ENCODE measurements at regions of chr1 and their contacts with region 1.

Region 1: GRCh38 chr1:43493661-43494450 is 36.8 kb upstream of the PTPRF start:
- DNase-seq: no peak
- H3K4me3 ChIP-seq: no peak overlapping the region
- H3K27ac ChIP-seq: no peak overlapping the region
- H3K4me1 ChIP-seq: no peaks in the 10 kb centered on the region
- H3K27me3 ChIP-seq: no peaks in the 10 kb centered on the region
- CTCF ChIP-seq: no peak
- EP300 ChIP-seq: no peak
- POLR2A ChIP-seq: no peak

Region 2: GRCh38 chr1:42231253-42231652 is 1262.6 kb before region 1 on chr1:
- intact Hi-C with region 1: loop called in 1 of 4 experiments (anchors 5 kb)
- DNase-seq: no peak
- H3K4me3 ChIP-seq: no peak overlapping the region
- H3K27ac ChIP-seq: no peak overlapping the region
- H3K4me1 ChIP-seq: no peaks in the 10 kb centered on the region
- H3K27me3 ChIP-seq: no peaks in the 10 kb centered on the region
- CTCF ChIP-seq: no peak
- EP300 ChIP-seq: no peak
- POLR2A ChIP-seq: no peak

Region 3: DNA sequence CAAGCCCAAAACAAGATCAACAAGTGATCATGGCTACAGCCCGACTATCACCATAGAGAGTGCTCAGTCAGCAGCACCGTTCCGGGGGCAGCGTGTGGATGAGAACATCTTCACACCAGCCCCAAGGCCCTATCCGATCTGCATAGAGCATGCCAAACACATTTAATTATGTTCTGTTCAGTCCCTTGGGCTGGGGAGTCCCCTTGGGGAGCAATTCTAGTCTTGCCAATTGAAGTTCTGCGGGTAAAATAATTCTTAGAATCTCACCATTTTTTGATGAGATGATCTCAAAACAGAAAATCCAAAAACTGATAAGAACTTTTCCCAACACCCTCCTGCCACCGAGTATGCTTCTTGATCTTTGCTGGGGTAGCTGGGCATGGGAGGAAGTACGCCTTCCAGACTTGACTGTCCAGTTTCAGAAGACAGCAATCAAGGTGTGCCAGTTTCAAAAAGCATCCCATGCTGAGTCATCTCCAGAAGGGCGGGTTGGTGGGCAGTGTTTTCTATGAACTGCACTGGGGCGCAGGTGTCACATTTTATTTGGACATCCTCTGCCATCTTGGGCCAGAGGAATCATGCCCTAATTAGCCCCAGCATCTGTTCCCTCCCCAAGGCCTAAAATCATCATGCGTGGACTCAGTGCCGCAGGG is 16.0 kb after region 1 on chr1:
- intact Hi-C with region 1: no loop called
- DNase-seq: no peak
- H3K4me3 ChIP-seq: no peak overlapping the region
- H3K27ac ChIP-seq: no peak overlapping the region
- H3K4me1 ChIP-seq: no peaks in the 10 kb centered on the region
- H3K27me3 ChIP-seq: no peaks in the 10 kb centered on the region
- CTCF ChIP-seq: no peak
- EP300 ChIP-seq: no peak
- POLR2A ChIP-seq: no peak

Measured in ovary (tissue), 10 donors.